IMR-90 (cell line): ENCODE measurements at regions of chr10 and their contacts with region 1.

Region 1: DNA sequence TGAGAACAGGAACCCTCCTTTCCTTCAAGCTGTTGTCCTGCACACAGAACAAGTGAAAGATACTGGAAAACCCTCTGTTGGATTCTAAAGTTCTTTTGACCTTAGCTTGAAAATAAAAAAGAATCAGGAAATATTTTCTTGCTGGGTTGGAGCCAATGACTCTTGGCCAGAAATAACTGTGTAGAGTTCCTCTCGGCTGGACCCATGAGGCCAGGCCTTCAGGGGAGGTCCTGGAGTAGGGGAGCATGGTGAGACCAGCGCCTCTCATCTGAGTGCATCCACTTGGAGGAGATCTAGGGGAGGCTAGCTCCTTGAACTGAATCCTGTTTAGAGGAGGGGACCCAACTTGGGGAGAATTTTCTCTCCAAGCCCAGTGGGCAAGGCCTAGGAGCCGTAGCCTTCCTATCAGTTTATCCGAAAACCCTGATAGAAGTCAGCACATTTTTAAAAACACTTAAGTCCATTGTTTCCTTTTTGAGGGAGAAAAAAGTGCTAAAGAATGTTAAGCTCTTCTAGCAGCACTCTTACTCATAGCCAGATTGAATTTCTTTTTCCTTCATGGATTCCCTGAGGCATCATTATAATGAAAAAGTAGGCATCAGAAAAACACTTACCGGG is 635.7 kb upstream of the ANKRD30A start:
- DNase-seq: peak; percentile 86
- ATAC-seq: peak; percentile 65
- H3K4me3 ChIP-seq: no peak overlapping the region
- H3K27ac ChIP-seq: peak overlapping the region; percentile 88
- H3K4me1 ChIP-seq: peaks cover 20% of the 10 kb centered on the region
- H3K27me3 ChIP-seq: no peaks in the 10 kb centered on the region
- CTCF ChIP-seq: no peak
- POLR2A ChIP-seq: no peak
- RAD21 ChIP-seq: no peak

Region 2: DNA sequence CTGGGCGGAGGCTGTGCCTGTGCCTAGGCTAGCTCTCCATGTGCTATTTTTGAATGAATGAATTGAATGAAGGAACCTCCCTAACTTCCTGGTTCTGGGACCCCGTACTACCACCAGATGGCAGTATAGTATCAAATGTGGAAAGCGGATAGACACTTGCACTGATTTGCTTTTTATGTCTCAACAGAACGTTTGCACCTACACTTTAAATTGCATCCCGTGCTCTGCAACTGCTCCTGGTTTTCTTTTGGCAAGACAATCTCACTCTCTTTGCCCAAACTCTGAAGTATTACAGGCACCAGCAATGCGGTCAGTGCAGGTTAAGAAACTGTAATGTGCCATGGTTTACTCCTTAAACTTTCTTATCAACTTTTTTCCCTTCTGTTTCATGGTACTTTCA is 854.1 kb before region 1 on chr10:
- CTCF ChIA-PET with region 1: no interaction called
- POLR2A ChIA-PET with region 1: no interaction called
- dilution Hi-C with region 1: no loop called
- in situ Hi-C with region 1: no loop called
- intact Hi-C with region 1: loop called (anchors 10 kb)
- DNase-seq: peak; percentile 74
- ATAC-seq: peak; percentile 48; the same call in 1 of the 2 replicates
- H3K4me3 ChIP-seq: no peak overlapping the region
- H3K27ac ChIP-seq: no peak overlapping the region
- H3K4me1 ChIP-seq: peaks cover 5% of the 10 kb centered on the region; the same call in 1 of the 2 replicates
- H3K27me3 ChIP-seq: no peaks in the 10 kb centered on the region
- CTCF ChIP-seq: peak; percentile 96
- POLR2A ChIP-seq: peak; percentile 67; the same call in 1 of the 2 replicates
- RAD21 ChIP-seq: peak; percentile 96

Region 3: DNA sequence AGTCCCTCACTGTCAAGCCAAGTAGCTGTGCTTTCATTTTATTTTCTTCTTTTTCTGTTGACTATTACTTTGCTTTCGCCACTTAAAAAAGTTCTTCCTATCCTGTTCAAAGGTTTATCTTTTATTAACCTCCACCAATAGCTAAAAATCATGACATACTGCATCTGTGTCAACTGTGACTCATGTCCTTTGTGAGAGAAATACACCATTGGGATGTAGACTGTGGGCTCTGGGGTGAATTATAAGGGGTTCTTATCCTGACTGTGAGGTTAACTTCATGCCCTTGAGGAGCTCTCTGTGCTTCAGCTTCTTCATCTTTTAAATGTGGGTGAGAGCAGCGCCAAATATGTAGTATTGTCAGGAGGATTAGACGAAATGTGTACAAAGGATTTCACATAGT is 563.8 kb after region 1 on chr10:
- CTCF ChIA-PET with region 1: no interaction called
- POLR2A ChIA-PET with region 1: no interaction called
- dilution Hi-C with region 1: no loop called
- in situ Hi-C with region 1: no loop called
- intact Hi-C with region 1: no loop called
- DNase-seq: no peak
- ATAC-seq: no peak
- H3K4me3 ChIP-seq: no peak overlapping the region
- H3K27ac ChIP-seq: no peak overlapping the region
- H3K4me1 ChIP-seq: no peaks in the 10 kb centered on the region
- H3K27me3 ChIP-seq: no peaks in the 10 kb centered on the region
- CTCF ChIP-seq: no peak
- POLR2A ChIP-seq: no peak
- RAD21 ChIP-seq: no peak